Caco-2 (cell line): ENCODE measurements at regions of chr11 and their contacts with region 1.

Region 1: GRCh38 chr11:560305-561147 is at the starts of genes LMNTD2 and RASSF7:
- DNase-seq: peak; percentile 96 to 98
- H3K4me3 ChIP-seq: peak within 1 kb of the TSS; percentile 68
- H3K4me3 Mint-ChIP-seq: peak within 1 kb of the TSS; percentile 90
- H3K27ac Mint-ChIP-seq: peak within 1 kb of the TSS; percentile 78
- H3K4me1 ChIP-seq: peaks cover 36% of the 10 kb centered on the region
- H3K4me1 Mint-ChIP-seq: peaks cover 14% of the 10 kb centered on the region
- H3K27me3 ChIP-seq: no peaks in the 10 kb centered on the region
- H3K27me3 Mint-ChIP-seq: no peaks in the 10 kb centered on the region
- CTCF ChIP-seq: no peak
- total RNA-seq, gene LMNTD2: 11.9 and 13.8 TPM in 2 replicates
- total RNA-seq, gene RASSF7: 61.1 and 65.5 TPM in 2 replicates

Region 2: DNA sequence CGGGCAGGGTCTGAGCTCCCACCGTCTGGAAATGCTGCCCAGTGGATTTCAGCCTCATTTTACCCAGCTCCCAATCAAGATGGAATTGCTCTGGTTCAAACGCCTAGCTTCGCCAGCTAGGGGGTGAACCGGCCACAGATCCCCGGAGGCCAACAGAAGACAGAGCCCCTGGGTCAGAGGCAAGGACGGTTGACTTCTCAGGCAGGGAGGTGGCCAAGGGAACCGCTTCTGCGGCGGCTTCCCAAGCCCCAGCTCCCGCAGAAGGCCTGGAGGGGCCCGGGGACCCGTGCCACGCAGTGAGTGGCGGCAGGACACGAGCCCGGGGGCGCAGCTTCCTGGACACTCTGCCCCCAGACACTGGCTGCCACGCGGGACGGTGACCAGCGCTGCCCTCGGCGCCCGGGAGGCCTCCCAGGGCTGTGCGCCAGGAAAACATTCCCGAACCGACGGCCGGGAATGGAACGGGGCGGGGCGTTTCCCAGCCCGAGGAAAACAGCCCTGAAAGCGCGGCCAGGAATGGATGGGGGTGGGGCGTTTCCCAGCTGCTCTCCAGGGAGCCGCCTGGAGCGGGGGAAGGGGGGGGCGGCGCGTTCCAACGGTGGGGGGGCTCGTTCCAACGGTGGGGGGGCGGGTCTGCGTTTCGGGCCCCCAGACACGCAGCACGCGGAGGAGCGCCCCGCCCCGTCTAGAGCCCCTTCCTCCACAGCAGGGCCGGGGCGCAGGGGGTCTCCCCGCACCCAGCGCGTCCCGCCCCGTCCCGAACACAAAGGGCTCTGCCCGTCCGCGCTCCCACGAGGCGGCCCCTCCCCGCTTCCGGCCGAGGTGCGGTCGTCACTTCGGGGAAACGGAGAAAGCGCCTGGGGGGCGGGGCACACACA is 204.7 kb before region 1 on chr11:
- CTCF ChIA-PET with region 1: no interaction called
- POLR2A ChIA-PET with region 1: interaction called, 10 read pairs
- intact Hi-C with region 1: no loop called
- DNase-seq: peak; percentile 94 to 95
- H3K4me3 ChIP-seq: peak overlapping the region; percentile 57
- H3K4me3 Mint-ChIP-seq: peak overlapping the region; percentile 52
- H3K27ac Mint-ChIP-seq: peak overlapping the region; percentile 46
- H3K4me1 ChIP-seq: peaks cover 29% of the 10 kb centered on the region
- H3K4me1 Mint-ChIP-seq: peaks cover 20% of the 10 kb centered on the region
- H3K27me3 ChIP-seq: no peaks in the 10 kb centered on the region
- H3K27me3 Mint-ChIP-seq: no peaks in the 10 kb centered on the region
- CTCF ChIP-seq: no peak

Region 3: DNA sequence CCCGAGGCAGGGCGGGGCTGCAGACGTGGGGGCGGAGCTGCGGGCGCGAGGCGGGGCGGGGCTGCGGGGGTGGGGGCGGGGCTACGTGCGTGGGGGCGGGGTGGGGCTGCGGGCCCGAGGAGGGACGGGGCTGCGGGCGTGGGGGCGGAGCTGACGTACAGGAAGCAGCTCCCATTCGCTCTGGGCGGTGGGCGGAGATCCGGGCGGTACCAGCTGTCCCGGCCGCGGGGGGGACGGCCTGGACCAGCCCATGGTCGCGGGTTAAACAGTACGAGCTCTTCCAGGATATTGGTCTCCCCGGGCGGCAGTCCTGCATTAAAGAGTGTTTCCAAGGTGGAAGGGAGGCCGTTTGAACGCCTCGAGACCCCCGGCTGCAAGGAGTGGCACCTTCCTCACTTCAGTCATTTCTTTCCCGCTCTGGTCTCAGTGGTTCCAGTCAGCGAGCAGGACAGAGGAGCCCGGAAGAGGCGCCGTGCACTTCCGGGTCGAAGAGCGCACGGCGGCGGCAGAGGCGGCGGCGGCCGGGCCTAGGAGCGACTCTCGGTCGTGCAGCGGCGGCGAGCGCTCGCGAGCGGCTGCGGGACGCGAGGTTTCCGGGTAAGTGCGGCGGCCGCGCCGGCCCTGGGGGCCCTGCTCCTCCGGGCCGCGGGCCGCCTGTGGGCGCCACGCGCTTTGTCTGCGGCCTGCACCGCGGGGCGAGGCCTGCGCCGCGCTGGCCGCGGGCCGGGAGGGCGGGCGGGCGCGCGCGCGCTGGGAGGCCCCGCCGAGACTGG is 15.7 kb after region 1 on chr11 and contains the start of gene PHRF1:
- CTCF ChIA-PET with region 1: interaction called, 4 read pairs
- POLR2A ChIA-PET with region 1: interaction called, 17 read pairs
- intact Hi-C with region 1: loop called (anchors 2 kb)
- DNase-seq: peak; percentile 95 to 97
- H3K4me3 ChIP-seq: peak within 1 kb of the TSS; percentile 100
- H3K4me3 Mint-ChIP-seq: peak within 1 kb of the TSS; percentile 78
- H3K27ac Mint-ChIP-seq: peak within 1 kb of the TSS; percentile 97
- H3K4me1 ChIP-seq: peaks cover 36% of the 10 kb centered on the region
- H3K4me1 Mint-ChIP-seq: peaks cover 22% of the 10 kb centered on the region
- H3K27me3 ChIP-seq: no peaks in the 10 kb centered on the region
- H3K27me3 Mint-ChIP-seq: no peaks in the 10 kb centered on the region
- CTCF ChIP-seq: no peak
- total RNA-seq, gene PHRF1: 43.9 and 46.8 TPM in 2 replicates

Region 4: GRCh38 chr11:587978-588380 is 27.5 kb after region 1 on chr11:
- CTCF ChIA-PET with region 1: interaction called, 5 read pairs
- POLR2A ChIA-PET with region 1: no interaction called
- intact Hi-C with region 1: loop called (anchors 2 kb)
- DNase-seq: peak; percentile 91 to 93
- H3K4me3 ChIP-seq: no peak overlapping the region
- H3K4me3 Mint-ChIP-seq: peak overlapping the region; percentile 5
- H3K27ac Mint-ChIP-seq: peak overlapping the region; percentile 82
- H3K4me1 ChIP-seq: peaks cover 25% of the 10 kb centered on the region
- H3K4me1 Mint-ChIP-seq: peaks cover 29% of the 10 kb centered on the region
- H3K27me3 ChIP-seq: no peaks in the 10 kb centered on the region
- H3K27me3 Mint-ChIP-seq: no peaks in the 10 kb centered on the region
- CTCF ChIP-seq: no peak

Region 5: GRCh38 chr11:819129-819931 is 258.8 kb after region 1 on chr11:
- CTCF ChIA-PET with region 1: no interaction called
- POLR2A ChIA-PET with region 1: interaction called, 12 read pairs
- intact Hi-C with region 1: no loop called
- DNase-seq: peak; percentile 92 to 95
- H3K4me3 ChIP-seq: peak overlapping the region; percentile 86
- H3K4me3 Mint-ChIP-seq: peak overlapping the region; percentile 76
- H3K27ac Mint-ChIP-seq: peak overlapping the region; percentile 66
- H3K4me1 ChIP-seq: peaks cover 21% of the 10 kb centered on the region
- H3K4me1 Mint-ChIP-seq: no peaks in the 10 kb centered on the region
- H3K27me3 ChIP-seq: no peaks in the 10 kb centered on the region
- H3K27me3 Mint-ChIP-seq: no peaks in the 10 kb centered on the region
- CTCF ChIP-seq: peak; percentile 8 to 23